Naive thymus-derived CD4-positive, alpha-beta T cell (primary cell): ENCODE measurements at regions of chr14 and their contacts with region 1.

Region 1: DNA sequence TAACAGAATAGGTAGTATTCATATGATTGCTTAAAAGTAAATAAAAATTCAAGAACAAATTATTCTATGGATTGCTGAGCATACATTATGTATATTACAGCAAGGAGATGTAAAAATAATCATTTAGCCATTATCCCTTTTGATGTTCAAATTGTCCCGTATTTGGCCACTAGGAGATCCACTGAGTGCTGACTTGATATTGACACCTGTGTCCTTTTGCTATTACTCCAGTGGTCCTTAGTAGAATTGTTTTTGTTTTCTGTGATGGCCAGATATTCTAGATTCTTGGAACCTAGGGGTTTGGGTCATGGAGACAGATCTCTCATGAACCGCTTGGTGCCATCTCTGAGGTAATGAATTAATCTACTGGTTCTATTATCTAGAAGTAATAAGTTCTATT is 16.8 kb downstream of the ERO1A start:
- DNase-seq: peak in 4 of 9 donors; percentile 10 to 23 (median 19)
- ATAC-seq: peak; percentile 42
- H3K4me3 ChIP-seq: no peak overlapping the region
- H3K4me3 Mint-ChIP-seq: no peak overlapping the region
- H3K27ac ChIP-seq: no peak overlapping the region
- H3K27ac Mint-ChIP-seq: peak overlapping the region in 1 of 9 donors; percentile 70
- H3K4me1 ChIP-seq: no peaks in the 10 kb centered on the region
- H3K4me1 Mint-ChIP-seq: peaks cover 0 to 20% (median 7%) of the 10 kb centered on the region in 7 donors
- H3K27me3 ChIP-seq: no peaks in the 10 kb centered on the region
- H3K27me3 Mint-ChIP-seq: no peaks in the 10 kb centered on the region

Region 2: DNA sequence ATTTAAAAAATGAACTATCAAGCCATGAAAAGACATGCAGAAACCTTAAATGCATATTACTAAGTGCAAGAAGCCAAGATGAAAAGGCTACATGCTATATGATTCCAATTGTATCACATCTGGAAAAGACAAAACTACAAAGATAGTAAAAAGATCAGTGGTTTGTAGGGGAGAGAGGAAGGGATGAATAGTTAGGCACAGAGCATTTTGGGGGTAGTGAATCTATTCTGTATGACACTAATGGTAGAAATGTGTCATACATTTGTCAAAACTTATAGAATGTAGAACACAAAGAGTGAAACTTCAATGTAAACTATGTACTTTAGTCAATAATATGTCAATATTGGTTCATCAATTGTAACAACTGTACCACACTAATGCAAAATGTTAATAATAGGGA is 147.1 kb before region 1 on chr14:
- CTCF ChIA-PET with region 1: no interaction called
- POLR2A ChIA-PET with region 1: no interaction called
- intact Hi-C with region 1: no loop called
- DNase-seq: no peak
- ATAC-seq: no peak
- H3K4me3 ChIP-seq: no peak overlapping the region
- H3K4me3 Mint-ChIP-seq: no peak overlapping the region
- H3K27ac ChIP-seq: no peak overlapping the region
- H3K27ac Mint-ChIP-seq: no peak overlapping the region
- H3K4me1 ChIP-seq: no peaks in the 10 kb centered on the region
- H3K4me1 Mint-ChIP-seq: peaks cover 0 to 2% (median 0%) of the 10 kb centered on the region in 7 donors
- H3K27me3 ChIP-seq: no peaks in the 10 kb centered on the region
- H3K27me3 Mint-ChIP-seq: no peaks in the 10 kb centered on the region

Region 3: GRCh38 chr14:52661314-52661713 is 17.3 kb before region 1 on chr14:
- CTCF ChIA-PET with region 1: no interaction called
- POLR2A ChIA-PET with region 1: no interaction called
- intact Hi-C with region 1: no loop called
- DNase-seq: no peak
- ATAC-seq: no peak
- H3K4me3 ChIP-seq: no peak overlapping the region
- H3K4me3 Mint-ChIP-seq: no peak overlapping the region
- H3K27ac ChIP-seq: no peak overlapping the region
- H3K27ac Mint-ChIP-seq: no peak overlapping the region
- H3K4me1 ChIP-seq: no peaks in the 10 kb centered on the region
- H3K4me1 Mint-ChIP-seq: peaks cover 0 to 18% (median 0%) of the 10 kb centered on the region in 7 donors
- H3K27me3 ChIP-seq: no peaks in the 10 kb centered on the region
- H3K27me3 Mint-ChIP-seq: no peaks in the 10 kb centered on the region

Region 4: DNA sequence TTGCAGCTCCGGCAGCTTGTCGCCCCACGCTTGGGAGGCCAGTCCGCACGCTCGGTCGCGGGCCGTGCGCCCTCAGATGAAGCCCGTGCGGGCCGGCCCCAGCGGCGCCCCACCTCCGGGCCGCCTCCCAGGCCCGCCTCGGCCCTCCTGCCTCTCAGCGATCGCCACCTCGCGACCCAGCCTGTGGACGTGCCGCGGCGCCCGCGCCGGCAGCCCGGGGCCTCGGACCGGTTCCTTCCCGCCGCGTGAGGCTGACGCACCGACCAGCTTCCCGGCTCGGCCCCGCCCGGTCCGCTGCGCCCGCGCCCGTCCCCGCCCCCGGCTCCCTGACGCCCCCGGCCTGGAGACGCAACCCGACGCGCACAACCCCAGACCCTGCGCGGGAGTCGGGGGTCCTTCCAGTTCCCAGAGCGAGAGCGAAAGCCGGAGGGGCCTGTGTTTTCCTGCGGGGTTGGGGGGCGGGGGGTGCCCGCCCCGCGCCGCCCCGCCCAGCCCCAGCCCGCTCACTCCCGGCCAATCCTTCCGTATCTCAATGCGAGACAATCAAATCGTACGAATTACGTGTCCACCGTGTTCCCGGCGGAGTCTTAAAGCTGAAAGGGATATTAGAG is 17.0 kb after region 1 on chr14 and contains the start of gene ERO1A:
- CTCF ChIA-PET with region 1: no interaction called
- POLR2A ChIA-PET with region 1: interaction called, 4 read pairs
- intact Hi-C with region 1: loop called (anchors 1 to 2 kb)
- DNase-seq: peak; percentile 26 to 83 (median 53)
- ATAC-seq: peak; percentile 82
- H3K4me3 ChIP-seq: peak within 1 kb of the TSS; percentile 79
- H3K4me3 Mint-ChIP-seq: peak within 1 kb of the TSS; percentile 95 to 99 (median 99)
- H3K27ac ChIP-seq: peak within 1 kb of the TSS; percentile 85
- H3K27ac Mint-ChIP-seq: peak within 1 kb of the TSS; percentile 94 to 99 (median 98)
- H3K4me1 ChIP-seq: peaks cover 26 to 27% of the 10 kb centered on the region in 2 donors
- H3K4me1 Mint-ChIP-seq: peaks cover 32 to 47% (median 42%) of the 10 kb centered on the region in 7 donors
- H3K27me3 ChIP-seq: no peaks in the 10 kb centered on the region
- H3K27me3 Mint-ChIP-seq: no peaks in the 10 kb centered on the region
- total RNA-seq, gene ERO1A: 65.3 to 201 (median 68.7) TPM

Region 5: DNA sequence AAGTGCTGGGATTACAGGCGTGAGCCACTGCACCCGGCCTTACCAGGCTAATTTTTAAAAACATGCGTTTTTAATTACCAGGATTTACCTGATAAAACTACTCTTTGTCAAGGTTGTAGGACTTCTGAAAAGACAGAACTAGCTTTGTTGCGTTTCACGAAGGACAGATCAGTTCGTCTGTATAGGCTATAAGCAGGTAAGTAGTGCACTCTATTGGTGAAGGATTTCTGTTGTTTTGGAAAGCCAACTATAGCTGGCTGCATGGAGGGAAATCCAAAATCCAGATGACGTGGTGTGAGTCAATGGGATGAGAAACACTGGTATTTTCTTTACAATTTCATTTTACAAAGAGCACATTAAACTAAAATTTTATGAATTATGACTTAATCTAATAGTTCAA is 98.2 kb after region 1 on chr14:
- CTCF ChIA-PET with region 1: no interaction called
- POLR2A ChIA-PET with region 1: no interaction called
- intact Hi-C with region 1: loop called in 1 of 2 experiments (anchors 5 kb)
- DNase-seq: peak in 3 of 9 donors; percentile 35 to 39 (median 36)
- ATAC-seq: no peak
- H3K4me3 ChIP-seq: no peak overlapping the region
- H3K4me3 Mint-ChIP-seq: no peak overlapping the region
- H3K27ac ChIP-seq: no peak overlapping the region
- H3K27ac Mint-ChIP-seq: peak overlapping the region in 4 of 9 donors; percentile 13 to 59 (median 30)
- H3K4me1 ChIP-seq: no peaks in the 10 kb centered on the region
- H3K4me1 Mint-ChIP-seq: peaks cover 0 to 11% (median 0%) of the 10 kb centered on the region in 7 donors
- H3K27me3 ChIP-seq: no peaks in the 10 kb centered on the region
- H3K27me3 Mint-ChIP-seq: no peaks in the 10 kb centered on the region

Region 6: DNA sequence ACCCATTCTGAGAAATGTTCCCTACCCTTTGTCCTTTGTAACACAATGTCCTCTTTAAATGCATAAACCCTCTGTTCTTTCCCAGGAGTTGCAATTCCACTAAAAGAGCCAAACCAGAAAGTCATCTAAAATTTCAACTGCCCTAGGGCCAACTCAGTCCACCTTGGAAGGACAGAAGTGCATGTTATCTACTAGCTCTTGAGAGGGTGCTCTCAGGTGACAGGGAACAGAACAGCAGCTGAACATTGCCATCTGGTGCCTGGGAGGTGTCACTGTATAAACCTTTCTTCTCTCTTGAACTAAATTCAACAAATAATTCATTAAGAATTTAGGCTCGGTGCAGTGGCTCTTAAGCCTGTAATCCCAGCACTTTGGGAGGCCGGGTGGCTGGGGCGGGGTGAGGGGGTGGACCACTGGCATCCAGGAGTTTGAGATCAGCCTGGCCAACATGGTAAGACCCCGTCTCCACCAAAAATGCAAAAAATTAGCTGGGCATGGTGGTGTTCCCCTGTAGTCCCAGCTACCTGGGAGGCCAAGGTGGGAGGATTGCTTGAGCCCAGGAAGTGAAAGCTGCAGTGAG is 282.6 kb after region 1 on chr14:
- CTCF ChIA-PET with region 1: no interaction called
- POLR2A ChIA-PET with region 1: no interaction called
- intact Hi-C with region 1: loop called in 1 of 2 experiments (anchors 5 kb)
- DNase-seq: peak in 7 of 9 donors; percentile 35 to 63 (median 50)
- ATAC-seq: peak; percentile 84
- H3K4me3 ChIP-seq: no peak overlapping the region
- H3K4me3 Mint-ChIP-seq: no peak overlapping the region
- H3K27ac ChIP-seq: no peak overlapping the region
- H3K27ac Mint-ChIP-seq: peak overlapping the region in 1 of 9 donors; percentile 62
- H3K4me1 ChIP-seq: peaks cover 0 to 3% of the 10 kb centered on the region in 2 donors
- H3K4me1 Mint-ChIP-seq: peaks cover 0 to 7% (median 4%) of the 10 kb centered on the region in 7 donors
- H3K27me3 ChIP-seq: no peaks in the 10 kb centered on the region
- H3K27me3 Mint-ChIP-seq: peaks cover 0 to 5% (median 0%) of the 10 kb centered on the region in 5 donors